WTC11 (cell line): ENCODE measurements at regions of chr6 and their contacts with region 1.

Region 1: DNA sequence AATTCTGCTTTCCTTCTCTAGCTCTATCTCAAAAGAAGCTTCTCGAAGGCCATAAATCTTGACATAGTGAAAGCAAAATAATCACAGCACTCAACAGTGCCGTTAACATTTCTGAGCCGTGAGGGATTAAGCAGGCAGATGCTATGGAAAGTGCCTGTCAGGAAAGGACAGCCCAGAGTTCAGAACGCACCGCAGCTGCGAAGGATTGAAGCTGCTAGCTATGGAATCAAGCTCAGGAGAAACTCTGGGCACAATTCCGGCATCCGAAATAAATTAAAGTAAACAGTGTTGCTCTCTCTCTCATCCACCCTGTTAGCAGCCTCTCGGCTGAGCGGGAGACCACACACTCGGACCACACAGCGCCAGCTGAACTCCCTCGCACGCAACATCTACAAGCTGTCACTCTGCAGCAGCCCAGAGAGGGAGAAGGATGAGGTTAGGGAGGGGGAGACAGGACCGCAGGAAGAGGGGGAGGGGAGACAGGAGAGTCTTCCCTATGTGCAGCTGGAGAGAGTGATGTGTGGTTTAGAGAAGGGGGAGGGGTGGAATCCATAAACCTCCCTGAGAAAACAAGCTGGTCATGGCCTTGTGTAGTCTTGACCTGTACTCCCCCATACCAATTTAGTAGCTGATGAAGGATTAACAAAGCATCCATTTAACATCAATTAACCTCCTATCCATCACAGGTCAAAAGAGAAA is 9.0 kb downstream of the EXOC2 start:
- DNase-seq: peak; percentile 76
- ATAC-seq: peak; percentile 86
- H3K4me3 Mint-ChIP-seq: peak overlapping the region; percentile 67
- H3K27ac Mint-ChIP-seq: peak overlapping the region; percentile 95
- H3K4me1 Mint-ChIP-seq: peaks cover 60% of the 10 kb centered on the region
- H3K27me3 Mint-ChIP-seq: no peaks in the 10 kb centered on the region
- CTCF ChIP-seq: no peak

Region 2: GRCh38 chr6:593139-593906 is 90.6 kb before region 1 on chr6:
- CTCF ChIA-PET with region 1: interaction called, 10 read pairs
- POLR2A ChIA-PET with region 1: no interaction called
- DNase-seq: peak; percentile 33
- ATAC-seq: peak; percentile 68
- H3K4me3 Mint-ChIP-seq: no peak overlapping the region
- H3K27ac Mint-ChIP-seq: peak overlapping the region; percentile 45
- H3K4me1 Mint-ChIP-seq: peaks cover 21% of the 10 kb centered on the region
- H3K27me3 Mint-ChIP-seq: no peaks in the 10 kb centered on the region
- CTCF ChIP-seq: peak; percentile 52

Region 3: DNA sequence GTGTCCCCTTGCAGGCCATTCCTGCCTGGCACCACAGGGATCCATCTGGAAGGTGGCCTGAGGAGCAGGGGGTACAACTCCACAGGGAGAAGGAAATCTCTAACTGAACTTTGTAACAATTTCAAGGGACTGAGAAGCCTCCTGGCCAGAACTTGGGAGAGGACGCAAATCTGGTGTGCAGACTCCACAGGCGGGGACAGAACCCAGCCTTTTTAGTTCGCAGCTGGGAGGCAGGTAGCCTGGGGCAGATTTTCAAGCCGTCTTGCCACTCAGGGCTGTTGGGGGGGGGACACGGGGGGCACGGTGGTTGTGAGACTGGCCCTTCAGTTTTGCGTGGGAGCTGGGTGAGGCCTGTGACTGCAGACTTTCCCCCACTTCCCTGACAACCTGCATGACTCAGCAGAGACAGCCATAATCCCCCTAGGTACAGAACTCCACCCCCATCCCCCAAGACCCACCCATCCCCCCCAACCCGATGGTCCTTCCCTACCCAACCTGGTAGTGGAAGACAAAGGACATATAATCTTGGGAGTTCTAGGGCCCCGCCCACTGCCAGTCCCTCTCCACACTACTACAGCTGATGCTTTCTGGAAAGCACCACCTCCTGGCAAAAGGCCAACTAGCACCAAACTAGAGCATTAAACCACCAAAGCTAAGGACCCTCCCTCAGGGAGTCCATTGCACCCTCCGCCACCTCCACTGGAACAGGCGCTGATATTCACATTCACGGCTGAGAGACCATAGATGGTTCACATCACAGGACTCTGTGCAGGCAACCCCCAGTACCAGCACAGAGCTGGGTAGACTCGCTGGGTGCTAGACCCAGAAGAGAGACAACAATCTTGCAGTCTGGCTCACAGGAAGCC is 23.9 kb before region 1 on chr6:
- CTCF ChIA-PET with region 1: interaction called, 19 read pairs
- POLR2A ChIA-PET with region 1: interaction called, 4 read pairs
- DNase-seq: peak; percentile 75
- ATAC-seq: peak; percentile 62
- H3K4me3 Mint-ChIP-seq: peak overlapping the region; percentile 33
- H3K27ac Mint-ChIP-seq: peak overlapping the region; percentile 94
- H3K4me1 Mint-ChIP-seq: peaks cover 84% of the 10 kb centered on the region
- H3K27me3 Mint-ChIP-seq: no peaks in the 10 kb centered on the region
- CTCF ChIP-seq: no peak

Region 4: DNA sequence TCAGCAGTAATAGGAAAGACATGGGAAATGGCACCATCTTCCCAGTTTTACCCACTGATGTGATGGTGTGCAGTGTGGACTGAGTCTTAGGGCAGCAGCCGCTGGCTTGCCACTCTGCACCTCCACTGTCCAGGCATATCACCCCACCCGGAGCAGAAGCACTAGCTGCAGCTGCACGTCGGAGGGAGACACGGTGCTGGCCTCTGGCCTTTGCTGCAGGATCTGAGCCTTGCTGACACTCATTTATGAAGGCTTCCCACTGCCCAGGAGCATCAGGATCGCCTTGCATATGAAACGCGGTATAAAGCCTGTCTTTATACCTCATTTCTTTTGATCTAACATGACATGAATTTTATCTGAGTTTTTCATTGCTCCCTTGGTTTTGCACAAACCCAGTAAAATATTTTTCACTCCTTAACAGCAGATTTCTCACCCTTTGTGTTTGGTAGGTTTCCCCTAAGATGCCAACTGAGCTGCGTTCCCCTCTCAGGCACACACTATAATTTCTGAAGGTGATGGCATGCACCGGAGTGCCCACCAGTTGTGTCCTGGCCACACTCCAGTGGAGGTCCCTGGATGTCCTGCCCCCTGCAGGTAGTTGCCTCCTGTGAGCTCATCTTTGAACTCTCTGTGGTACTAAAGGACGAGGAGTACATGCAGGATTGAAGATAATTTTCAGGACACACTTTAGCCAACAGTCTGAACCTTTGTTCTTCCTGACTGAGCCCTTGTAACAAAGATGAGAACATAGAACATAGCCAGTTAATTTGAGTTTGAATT is 18.0 kb after region 1 on chr6:
- CTCF ChIA-PET with region 1: interaction called, 12 read pairs
- POLR2A ChIA-PET with region 1: no interaction called
- DNase-seq: peak; percentile 30
- ATAC-seq: peak; percentile 73
- H3K4me3 Mint-ChIP-seq: no peak overlapping the region
- H3K27ac Mint-ChIP-seq: peak overlapping the region; percentile 73; the same call in 1 of the 2 replicates
- H3K4me1 Mint-ChIP-seq: peaks cover 41% of the 10 kb centered on the region
- H3K27me3 Mint-ChIP-seq: no peaks in the 10 kb centered on the region
- CTCF ChIP-seq: no peak

Region 5: GRCh38 chr6:951399-952181 is 267.7 kb after region 1 on chr6:
- CTCF ChIA-PET with region 1: no interaction called
- POLR2A ChIA-PET with region 1: no interaction called
- DNase-seq: no peak
- ATAC-seq: no peak
- H3K4me3 Mint-ChIP-seq: no peak overlapping the region
- H3K27ac Mint-ChIP-seq: no peak overlapping the region
- H3K4me1 Mint-ChIP-seq: no peaks in the 10 kb centered on the region
- H3K27me3 Mint-ChIP-seq: peaks cover 3% of the 10 kb centered on the region; the same call in 1 of the 2 replicates
- CTCF ChIP-seq: no peak